ENCODE measurements at regions of chr18 and their contacts with region 1.

Region 1: DNA sequence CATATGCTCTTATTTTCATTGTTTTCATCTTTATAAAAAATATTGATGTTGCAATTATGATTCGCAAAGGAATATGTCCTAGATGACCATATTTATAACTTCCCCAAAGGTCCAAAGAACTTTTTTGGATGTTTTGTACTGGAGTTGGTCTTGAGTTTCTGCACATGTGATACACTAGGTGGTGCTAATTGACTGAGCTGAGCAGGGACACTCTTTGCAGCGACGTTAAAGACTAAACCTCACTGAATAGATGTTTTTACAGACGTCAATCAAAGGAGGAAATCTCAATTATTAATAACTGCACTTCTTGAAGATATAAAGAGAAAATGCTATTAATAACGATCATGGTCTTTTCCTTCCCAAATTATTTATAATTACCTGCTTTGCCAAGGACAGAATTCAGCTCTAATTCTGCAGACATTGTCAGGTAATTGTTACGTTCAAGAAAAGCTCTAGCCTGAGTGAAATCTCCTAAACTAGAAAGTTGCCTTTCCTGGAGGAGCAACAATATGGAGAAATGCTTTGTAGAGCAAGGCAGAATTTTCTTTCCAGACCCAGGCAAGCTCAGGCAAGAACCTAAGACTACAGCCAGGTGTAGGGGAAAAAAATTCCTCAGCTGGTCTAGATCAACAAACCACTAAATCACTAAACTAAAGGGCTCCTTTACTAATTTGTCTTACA is 119.3 kb upstream of the RBBP8 start:
- DNase-seq: peak in 4 of 5 donors; percentile 3 to 7 (median 5)
- H3K4me3 ChIP-seq: no peak overlapping the region
- H3K4me3 Mint-ChIP-seq: no peak overlapping the region
- H3K27ac ChIP-seq: no peak overlapping the region
- H3K27ac Mint-ChIP-seq: no peak overlapping the region
- H3K4me1 ChIP-seq: no peaks in the 10 kb centered on the region
- H3K4me1 Mint-ChIP-seq: no peaks in the 10 kb centered on the region
- H3K27me3 ChIP-seq: no peaks in the 10 kb centered on the region
- H3K27me3 Mint-ChIP-seq: peaks cover 10 to 18% of the 10 kb centered on the region in 2 donors

Region 2: GRCh38 chr18:22828171-22828570 is 14.4 kb after region 1 on chr18:
- CTCF ChIA-PET with region 1: no interaction called
- POLR2A ChIA-PET with region 1: no interaction called
- intact Hi-C with region 1: no loop called
- DNase-seq: no peak
- H3K4me3 ChIP-seq: no peak overlapping the region
- H3K4me3 Mint-ChIP-seq: no peak overlapping the region
- H3K27ac ChIP-seq: no peak overlapping the region
- H3K27ac Mint-ChIP-seq: no peak overlapping the region
- H3K4me1 ChIP-seq: no peaks in the 10 kb centered on the region
- H3K4me1 Mint-ChIP-seq: no peaks in the 10 kb centered on the region
- H3K27me3 ChIP-seq: no peaks in the 10 kb centered on the region
- H3K27me3 Mint-ChIP-seq: peaks cover 14 to 19% of the 10 kb centered on the region in 2 donors

Region 3: DNA sequence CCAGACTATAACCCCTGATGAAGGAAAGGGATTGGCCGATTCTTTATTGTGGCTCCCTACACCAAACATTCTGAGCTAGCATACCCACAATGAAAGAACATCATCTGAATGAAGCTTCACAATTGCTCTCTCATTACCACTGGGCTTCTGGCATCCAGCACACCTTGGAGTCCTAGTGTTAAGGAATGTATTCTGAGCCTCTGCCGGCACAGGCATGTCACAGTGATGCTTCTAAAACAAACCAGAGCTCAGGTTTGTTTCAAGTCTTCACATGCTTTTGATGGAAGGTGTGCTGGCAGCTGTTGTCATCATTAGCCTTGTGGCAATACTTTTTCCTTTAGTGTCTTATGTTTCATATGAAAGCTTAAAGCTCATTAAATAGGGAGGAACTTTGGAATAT is 43.1 kb after region 1 on chr18:
- CTCF ChIA-PET with region 1: no interaction called
- POLR2A ChIA-PET with region 1: no interaction called
- intact Hi-C with region 1: no loop called
- DNase-seq: no peak
- H3K4me3 ChIP-seq: no peak overlapping the region
- H3K4me3 Mint-ChIP-seq: no peak overlapping the region
- H3K27ac ChIP-seq: no peak overlapping the region
- H3K27ac Mint-ChIP-seq: no peak overlapping the region
- H3K4me1 ChIP-seq: no peaks in the 10 kb centered on the region
- H3K4me1 Mint-ChIP-seq: no peaks in the 10 kb centered on the region
- H3K27me3 ChIP-seq: peaks cover 10% of the 10 kb centered on the region
- H3K27me3 Mint-ChIP-seq: peaks cover 11 to 13% of the 10 kb centered on the region in 2 donors

Region 4: DNA sequence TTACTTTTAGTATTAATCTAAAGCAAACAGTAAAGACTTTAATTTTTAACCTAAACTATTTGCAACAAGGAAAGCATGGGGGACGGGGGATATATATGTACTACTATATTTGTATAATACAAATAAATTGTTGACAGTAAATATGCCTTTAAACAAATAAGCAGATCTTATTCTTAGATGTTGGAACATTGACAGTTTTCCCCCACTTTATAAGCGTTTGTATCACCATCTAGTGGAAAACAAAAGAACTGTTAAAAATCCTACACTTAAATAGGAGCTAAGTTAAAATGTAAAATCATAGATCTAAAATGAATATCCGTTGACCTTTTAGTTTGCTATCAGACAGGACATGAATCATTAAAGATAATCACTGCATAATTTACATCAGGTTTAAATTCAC is 169.4 kb after region 1 on chr18:
- CTCF ChIA-PET with region 1: interaction called, 4 read pairs
- POLR2A ChIA-PET with region 1: no interaction called
- intact Hi-C with region 1: loop called (anchors 5 kb)
- DNase-seq: peak in 4 of 5 donors; percentile 16 to 31 (median 23)
- H3K4me3 ChIP-seq: no peak overlapping the region
- H3K4me3 Mint-ChIP-seq: no peak overlapping the region
- H3K27ac ChIP-seq: no peak overlapping the region
- H3K27ac Mint-ChIP-seq: no peak overlapping the region
- H3K4me1 ChIP-seq: no peaks in the 10 kb centered on the region
- H3K4me1 Mint-ChIP-seq: peaks cover 0 to 5% (median 4%) of the 10 kb centered on the region in 4 donors
- H3K27me3 ChIP-seq: no peaks in the 10 kb centered on the region
- H3K27me3 Mint-ChIP-seq: no peaks in the 10 kb centered on the region